Breast epithelium (tissue), 4 donors: ENCODE measurements at regions of chr10 and their contacts with region 1.

Region 1: GRCh38 chr10:80158598-80159127 is 26.1 kb downstream of the PLAC9 start:
- DNase-seq: peak; percentile 69 to 72
- H3K4me3 ChIP-seq: peak overlapping the region in 1 of 3 donors; percentile 7
- H3K27ac ChIP-seq: peak overlapping the region; percentile 50 to 95
- H3K4me1 ChIP-seq: peaks cover 2 to 17% of the 10 kb centered on the region in 2 donors
- H3K27me3 ChIP-seq: no peaks in the 10 kb centered on the region
- CTCF ChIP-seq: no peak
- POLR2A ChIP-seq: no peak

Region 2: DNA sequence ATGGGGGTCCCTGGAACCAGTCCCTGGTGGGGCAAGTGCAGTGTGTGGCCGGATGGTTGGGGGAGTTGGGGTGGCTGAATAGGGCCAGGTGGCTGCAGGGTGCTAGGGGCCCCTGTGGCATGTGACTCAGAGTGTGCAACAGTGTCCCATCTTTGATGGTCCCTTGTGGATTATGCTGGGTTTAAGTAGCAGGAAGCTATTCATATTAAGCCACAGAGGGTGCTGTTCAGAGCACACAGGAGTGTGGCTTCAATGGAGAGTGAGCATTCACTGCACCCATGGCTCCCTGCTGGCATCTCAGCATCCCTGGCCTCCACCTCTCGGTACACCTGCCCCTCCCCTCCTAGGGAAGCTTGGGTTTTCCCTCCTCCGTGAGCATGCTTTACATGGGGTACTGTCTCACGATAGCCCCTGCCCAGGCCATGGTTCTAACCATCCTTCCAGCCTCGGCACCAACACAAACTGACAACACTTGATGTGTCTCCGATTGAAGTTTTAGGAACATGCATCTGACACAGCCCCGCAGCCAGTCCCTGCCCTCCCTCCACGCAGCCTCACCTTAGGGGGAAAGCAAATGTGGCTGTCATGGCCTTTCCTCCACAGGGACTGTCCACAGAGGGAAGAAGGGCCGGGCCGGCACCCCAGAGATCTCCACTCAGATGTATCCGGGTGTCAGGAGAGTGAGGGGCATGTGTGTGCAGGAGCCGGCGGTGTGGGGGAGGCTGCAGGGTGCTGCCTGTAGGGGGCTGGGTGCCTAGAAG is 841.8 kb before region 1 on chr10:
- intact Hi-C with region 1: no loop called
- DNase-seq: no peak
- H3K4me3 ChIP-seq: no peak overlapping the region
- H3K27ac ChIP-seq: no peak overlapping the region
- H3K4me1 ChIP-seq: no peaks in the 10 kb centered on the region
- H3K27me3 ChIP-seq: no peaks in the 10 kb centered on the region
- CTCF ChIP-seq: no peak
- POLR2A ChIP-seq: no peak

Region 3: GRCh38 chr10:79929409-79929904 is 229.2 kb before region 1 on chr10:
- intact Hi-C with region 1: no loop called
- DNase-seq: peak; percentile 43 to 78
- H3K4me3 ChIP-seq: no peak overlapping the region
- H3K27ac ChIP-seq: no peak overlapping the region
- H3K4me1 ChIP-seq: no peaks in the 10 kb centered on the region
- H3K27me3 ChIP-seq: peaks cover 0 to 7% of the 10 kb centered on the region in 2 donors
- CTCF ChIP-seq: peak; percentile 63 to 79 (median 64)
- POLR2A ChIP-seq: no peak

Region 4: GRCh38 chr10:80202934-80203834 is 44.5 kb after region 1 on chr10:
- intact Hi-C with region 1: loop called (anchors 5 kb)
- DNase-seq: peak in 1 of 2 donors; percentile 55
- H3K4me3 ChIP-seq: peak overlapping the region; percentile 78 to 94 (median 92)
- H3K27ac ChIP-seq: peak overlapping the region; percentile 97 to 98
- H3K4me1 ChIP-seq: peaks cover 0 to 16% of the 10 kb centered on the region in 2 donors
- H3K27me3 ChIP-seq: no peaks in the 10 kb centered on the region
- CTCF ChIP-seq: no peak
- POLR2A ChIP-seq: no peak

Region 5: GRCh38 chr10:81995254-81995653 is 1836.6 kb after region 1 on chr10:
- intact Hi-C with region 1: no loop called
- DNase-seq: no peak
- H3K4me3 ChIP-seq: no peak overlapping the region
- H3K27ac ChIP-seq: no peak overlapping the region
- H3K4me1 ChIP-seq: no peaks in the 10 kb centered on the region
- H3K27me3 ChIP-seq: no peaks in the 10 kb centered on the region
- CTCF ChIP-seq: no peak
- POLR2A ChIP-seq: no peak